Activated CD4-positive, alpha-beta T cell treated with anti-CD3 and anti-CD28 coated beads, Interleukin-2, amount 10 ng/mL, durations not matched to agents 7 days and 5 days (primary cell): ENCODE measurements at regions of chr17 and their contacts with region 1.

Region 1: DNA sequence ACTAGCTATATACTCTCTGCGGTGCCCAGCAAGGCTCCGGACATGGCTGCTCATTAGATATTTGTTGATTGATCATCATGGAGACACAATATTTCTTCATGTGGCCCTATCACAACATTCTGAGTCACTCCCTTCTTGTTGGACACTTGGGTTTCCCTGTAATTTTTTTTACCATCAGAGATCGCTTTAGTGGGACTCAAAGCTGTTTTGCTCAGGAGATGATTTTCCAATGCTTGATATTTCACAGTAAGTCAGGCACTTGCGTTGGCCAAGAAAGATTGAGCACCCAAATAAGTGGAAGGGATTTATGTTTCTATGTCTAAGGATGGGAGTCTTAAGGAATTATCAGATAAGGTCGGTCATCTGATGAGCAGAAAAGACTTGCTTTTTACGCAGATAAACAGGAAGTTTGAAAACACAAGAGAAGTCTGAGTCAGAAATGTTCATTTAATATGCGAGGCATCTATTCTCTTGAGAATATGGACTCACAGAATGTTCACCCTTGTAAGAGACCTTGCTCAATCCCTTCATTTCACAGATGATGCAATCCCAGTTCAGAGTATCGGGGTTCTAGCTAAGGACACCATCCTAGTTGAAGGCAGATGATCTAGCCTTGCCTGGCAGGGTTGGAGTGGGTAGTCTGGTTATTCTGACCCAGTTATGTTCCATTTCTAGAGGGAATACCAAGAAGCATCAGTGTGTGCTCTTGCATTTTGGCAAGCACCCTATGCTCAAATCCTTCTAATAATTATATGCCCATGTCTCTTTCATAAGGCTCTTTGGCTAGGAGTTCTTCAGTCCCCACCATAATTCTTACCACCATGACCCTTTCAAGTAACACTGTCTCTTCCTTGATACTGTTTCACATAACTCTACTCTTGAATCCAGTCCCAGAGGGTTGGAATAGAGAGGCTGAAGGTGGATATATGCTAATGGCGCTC is 42.4 kb downstream of the YPEL2 start:
- DNase-seq: no peak
- H3K4me3 Mint-ChIP-seq: no peak overlapping the region
- H3K27ac Mint-ChIP-seq: peak overlapping the region; percentile 82
- H3K4me1 Mint-ChIP-seq: peaks cover 62% of the 10 kb centered on the region
- H3K27me3 Mint-ChIP-seq: no peaks in the 10 kb centered on the region

Region 2: GRCh38 chr17:59342681-59343131 is 31.1 kb before region 1 on chr17:
- CTCF ChIA-PET with region 1: no interaction called
- POLR2A ChIA-PET with region 1: no interaction called
- DNase-seq: peak; percentile 18
- H3K4me3 Mint-ChIP-seq: no peak overlapping the region
- H3K27ac Mint-ChIP-seq: peak overlapping the region; percentile 76
- H3K4me1 Mint-ChIP-seq: peaks cover 30% of the 10 kb centered on the region
- H3K27me3 Mint-ChIP-seq: no peaks in the 10 kb centered on the region

Region 3: GRCh38 chr17:59355696-59356325 is 18.0 kb before region 1 on chr17:
- CTCF ChIA-PET with region 1: interaction called, 11 read pairs
- POLR2A ChIA-PET with region 1: no interaction called
- DNase-seq: no peak
- H3K4me3 Mint-ChIP-seq: no peak overlapping the region
- H3K27ac Mint-ChIP-seq: no peak overlapping the region
- H3K4me1 Mint-ChIP-seq: peaks cover 72% of the 10 kb centered on the region
- H3K27me3 Mint-ChIP-seq: no peaks in the 10 kb centered on the region

Region 4: DNA sequence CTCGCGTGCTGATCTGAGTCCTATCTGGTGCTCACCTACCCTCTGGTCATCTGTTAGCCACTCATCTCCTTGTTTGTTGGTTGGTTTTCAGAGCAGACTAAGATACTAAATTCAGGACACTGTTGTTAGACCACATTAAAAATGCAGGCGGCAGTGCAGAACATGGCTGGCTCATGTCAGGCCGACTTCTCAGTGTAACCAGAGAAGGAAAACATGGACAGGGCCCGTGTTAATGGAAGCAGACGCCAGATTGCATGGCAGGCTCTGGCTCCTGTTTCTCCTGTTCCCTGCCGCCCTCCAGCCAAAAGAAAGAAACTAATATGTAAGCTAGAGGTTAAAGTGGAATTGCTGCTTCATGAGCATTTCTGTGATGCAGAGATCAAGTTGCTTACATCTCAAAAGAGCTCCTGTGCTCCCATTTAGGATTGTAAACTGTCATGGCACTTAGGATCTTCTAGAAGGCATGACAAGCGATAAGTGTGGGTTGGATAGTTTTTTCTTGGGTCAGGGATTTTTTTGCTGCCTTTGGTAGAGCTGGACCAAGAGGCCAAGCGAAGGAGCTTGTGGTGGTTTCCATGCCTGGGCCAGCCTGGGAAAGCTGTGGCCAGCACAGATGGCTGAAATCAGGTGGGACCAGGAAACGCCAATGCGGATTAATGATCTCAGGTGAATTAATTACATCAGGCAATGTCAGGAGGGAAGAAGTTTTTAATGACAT is 13.7 kb after region 1 on chr17:
- CTCF ChIA-PET with region 1: interaction called, 13 read pairs
- POLR2A ChIA-PET with region 1: no interaction called
- DNase-seq: no peak
- H3K4me3 Mint-ChIP-seq: no peak overlapping the region
- H3K27ac Mint-ChIP-seq: no peak overlapping the region
- H3K4me1 Mint-ChIP-seq: peaks cover 4% of the 10 kb centered on the region
- H3K27me3 Mint-ChIP-seq: no peaks in the 10 kb centered on the region